ENCODE measurements at regions of chr16 and their contacts with region 1.

Region 1: GRCh38 chr16:53054670-53055485 is at the start of gene CHD9:
- DNase-seq: peak; percentile 88
- ATAC-seq: peak; percentile 82
- H3K4me3 ChIP-seq: peak within 1 kb of the TSS; percentile 88
- H3K27ac ChIP-seq: peak within 1 kb of the TSS; percentile 45
- H3K4me1 ChIP-seq: peaks cover 19% of the 10 kb centered on the region
- H3K27me3 ChIP-seq: no peaks in the 10 kb centered on the region
- CTCF ChIP-seq: peak; percentile 81
- total RNA-seq, gene CHD9: 13.3 and 19.5 TPM in 2 replicates

Region 2: DNA sequence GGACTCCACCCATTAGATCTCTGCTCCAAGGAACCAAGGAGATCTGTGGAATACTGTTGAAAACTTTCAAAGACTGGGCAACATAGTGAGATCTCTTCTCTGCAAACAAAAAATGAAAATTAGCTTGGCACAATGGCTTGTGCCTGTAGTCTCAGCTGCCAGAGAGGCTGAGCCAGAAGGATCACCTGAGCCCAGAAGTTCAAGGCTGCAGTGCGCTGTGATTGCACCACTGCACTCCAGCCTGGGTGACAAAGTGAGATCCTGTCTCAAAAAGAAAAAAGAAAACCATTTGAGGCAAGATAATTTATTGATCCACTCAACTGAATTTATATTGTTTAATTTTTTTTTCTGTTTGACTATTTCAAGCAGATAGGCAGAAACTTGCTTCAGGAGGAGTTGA is 57.0 kb before region 1 on chr16:
- CTCF ChIA-PET with region 1: no interaction called
- POLR2A ChIA-PET with region 1: no interaction called
- intact Hi-C with region 1: no loop called
- DNase-seq: no peak
- ATAC-seq: no peak
- H3K4me3 ChIP-seq: no peak overlapping the region
- H3K27ac ChIP-seq: no peak overlapping the region
- H3K4me1 ChIP-seq: no peaks in the 10 kb centered on the region
- H3K27me3 ChIP-seq: no peaks in the 10 kb centered on the region
- CTCF ChIP-seq: no peak

Region 3: DNA sequence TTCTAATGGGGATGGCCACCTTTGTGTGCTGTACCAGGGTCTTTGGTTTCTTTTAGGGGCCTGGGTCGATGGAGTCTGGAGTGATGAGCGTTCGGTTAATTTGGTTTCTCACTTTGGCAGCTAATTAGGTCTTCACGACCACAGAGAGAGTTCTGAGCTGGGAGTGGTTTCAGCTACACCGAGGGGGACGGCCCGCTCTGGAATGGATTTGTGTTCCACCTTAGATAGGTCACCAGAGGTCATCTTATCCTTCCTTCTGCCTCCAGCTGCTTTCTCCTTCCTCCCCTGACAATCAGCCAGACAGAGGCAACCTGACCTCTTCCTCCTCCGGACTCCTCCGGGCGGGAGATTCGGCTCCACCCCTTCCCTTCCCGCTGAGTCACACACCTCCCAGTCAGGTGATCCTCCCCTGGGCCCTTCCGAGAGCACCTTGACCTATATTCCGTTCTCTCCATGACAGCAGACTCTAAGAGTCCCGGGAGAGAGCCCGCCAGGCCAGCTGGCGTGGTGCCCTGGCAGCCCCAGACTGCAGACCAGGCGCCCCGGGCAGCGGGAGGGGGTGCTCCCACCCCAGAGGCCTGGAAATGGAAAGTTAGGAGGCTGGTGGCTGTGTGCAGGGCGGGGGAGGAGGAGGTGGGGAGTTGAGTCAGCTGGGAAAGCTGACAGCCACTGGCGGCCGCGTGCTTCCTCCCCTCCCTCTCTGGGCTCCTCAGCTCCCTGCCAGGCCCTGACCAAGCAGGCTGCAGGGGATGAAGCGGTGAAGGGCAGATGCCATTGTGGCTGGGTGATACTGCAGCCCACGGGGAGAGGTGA is 44.6 kb after region 1 on chr16:
- CTCF ChIA-PET with region 1: interaction called, 7 read pairs
- POLR2A ChIA-PET with region 1: no interaction called
- intact Hi-C with region 1: loop called (anchors 1 kb)
- DNase-seq: peak; percentile 92
- ATAC-seq: peak; percentile 84
- H3K4me3 ChIP-seq: peak overlapping the region; percentile 43
- H3K27ac ChIP-seq: peak overlapping the region; percentile 98
- H3K4me1 ChIP-seq: peaks cover 17% of the 10 kb centered on the region
- H3K27me3 ChIP-seq: no peaks in the 10 kb centered on the region
- CTCF ChIP-seq: no peak

Region 4: GRCh38 chr16:53207810-53208752 is 153.2 kb after region 1 on chr16:
- CTCF ChIA-PET with region 1: no interaction called
- POLR2A ChIA-PET with region 1: no interaction called
- intact Hi-C with region 1: loop called (anchors 2 kb)
- DNase-seq: peak; percentile 66
- ATAC-seq: peak; percentile 86
- H3K4me3 ChIP-seq: peak overlapping the region; percentile 75
- H3K27ac ChIP-seq: peak overlapping the region; percentile 83
- H3K4me1 ChIP-seq: peaks cover 4% of the 10 kb centered on the region
- H3K27me3 ChIP-seq: no peaks in the 10 kb centered on the region
- CTCF ChIP-seq: peak; percentile 64

Region 5: GRCh38 chr16:53415504-53415903 is 360.6 kb after region 1 on chr16:
- CTCF ChIA-PET with region 1: no interaction called
- POLR2A ChIA-PET with region 1: no interaction called
- intact Hi-C with region 1: loop called (anchors 5 kb)
- DNase-seq: peak; percentile 48
- ATAC-seq: peak; percentile 72
- H3K4me3 ChIP-seq: peak overlapping the region; percentile 28; the same call in 1 of the 2 replicates
- H3K27ac ChIP-seq: peak overlapping the region; percentile 42
- H3K4me1 ChIP-seq: peaks cover 13% of the 10 kb centered on the region
- H3K27me3 ChIP-seq: no peaks in the 10 kb centered on the region
- CTCF ChIP-seq: peak; percentile 33; the same call in 1 of the 2 replicates

Measured in PC-3 (cell line).